ENCODE measurements at regions of chr10 and their contacts with region 1.

Region 1: DNA sequence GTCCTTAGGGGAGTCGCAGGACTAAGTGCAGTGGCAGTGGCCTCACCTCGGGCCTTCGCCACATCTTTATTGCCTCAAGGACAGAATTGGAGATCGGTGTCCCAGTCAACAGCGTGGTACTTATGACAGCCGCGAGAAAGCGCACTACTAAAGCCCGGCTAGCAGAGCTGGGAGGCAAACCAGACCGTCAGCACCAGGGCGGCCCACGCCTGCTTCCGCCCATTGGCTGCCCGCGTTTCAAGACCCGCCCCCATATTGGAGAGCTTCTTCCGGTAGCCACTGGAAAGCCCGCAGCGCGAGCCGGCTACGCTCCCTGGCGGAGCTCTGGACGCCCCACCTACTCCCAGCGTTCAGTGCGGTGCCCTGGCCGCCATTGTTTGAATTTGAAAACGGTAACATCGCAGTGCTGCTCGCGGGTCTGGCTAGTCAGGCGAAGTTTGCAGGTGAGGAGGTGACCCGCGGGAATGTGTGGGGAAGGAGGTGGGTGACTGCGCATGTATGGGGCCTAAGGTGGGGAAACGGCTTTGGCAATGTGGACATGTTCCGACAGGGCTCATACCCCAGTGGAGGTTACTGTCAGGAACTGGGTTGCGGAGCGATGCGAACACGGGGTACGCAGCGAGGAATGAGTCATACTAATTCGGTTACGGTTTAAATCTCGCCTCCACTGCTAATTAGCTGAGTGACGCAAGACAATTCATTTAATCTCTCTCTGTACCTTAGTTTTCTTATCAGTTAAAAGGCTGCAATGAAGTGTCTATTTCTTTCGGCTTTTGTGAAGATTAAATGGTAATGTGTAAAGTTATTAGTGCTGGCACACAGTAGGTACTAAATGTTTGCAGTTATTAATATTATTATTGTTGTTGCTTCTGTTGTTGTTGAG is at the start of gene KIF20B:
- DNase-seq: peak; percentile 97 to 98
- H3K4me3 ChIP-seq: peak within 1 kb of the TSS; percentile 78
- H3K4me3 Mint-ChIP-seq: peak within 1 kb of the TSS; percentile 88
- H3K27ac Mint-ChIP-seq: peak within 1 kb of the TSS; percentile 89
- H3K4me1 ChIP-seq: peaks cover 6% of the 10 kb centered on the region
- H3K4me1 Mint-ChIP-seq: peaks cover 31% of the 10 kb centered on the region
- H3K27me3 ChIP-seq: no peaks in the 10 kb centered on the region
- H3K27me3 Mint-ChIP-seq: no peaks in the 10 kb centered on the region
- CTCF ChIP-seq: peak in 1 of 2 experiments; percentile 63
- total RNA-seq, gene KIF20B: 43.2 and 43.9 TPM in 2 replicates

Region 2: DNA sequence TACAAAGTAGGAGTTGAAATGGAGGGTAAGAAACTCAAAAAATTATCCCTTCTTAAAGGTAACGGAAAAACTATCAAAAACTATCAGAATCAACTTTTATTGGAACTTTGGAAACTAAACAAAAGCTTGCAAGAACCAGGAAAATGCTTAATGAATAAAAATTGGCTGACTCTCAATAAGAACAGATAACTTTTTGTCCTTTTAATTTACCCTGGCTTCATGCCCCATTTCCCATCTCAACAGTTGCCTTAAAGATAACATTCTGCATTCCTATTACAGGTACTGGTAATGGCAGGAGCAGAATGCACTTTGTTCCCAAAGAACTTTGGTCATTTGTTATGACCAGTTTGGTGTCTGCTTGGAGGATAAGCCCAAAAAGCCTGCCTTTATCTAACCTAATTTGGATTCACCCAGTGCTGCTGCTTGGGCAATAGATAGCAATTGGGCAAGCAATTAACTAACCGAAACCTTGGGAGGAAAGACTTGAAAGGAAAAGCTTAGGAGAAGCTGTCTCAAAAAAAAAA is 512.2 kb before region 1 on chr10:
- CTCF ChIA-PET with region 1: no interaction called
- POLR2A ChIA-PET with region 1: no interaction called
- intact Hi-C with region 1: no loop called
- DNase-seq: no peak
- H3K4me3 ChIP-seq: no peak overlapping the region
- H3K4me3 Mint-ChIP-seq: no peak overlapping the region
- H3K27ac Mint-ChIP-seq: no peak overlapping the region
- H3K4me1 ChIP-seq: no peaks in the 10 kb centered on the region
- H3K4me1 Mint-ChIP-seq: no peaks in the 10 kb centered on the region
- H3K27me3 ChIP-seq: no peaks in the 10 kb centered on the region
- H3K27me3 Mint-ChIP-seq: peaks cover 4% of the 10 kb centered on the region
- CTCF ChIP-seq: no peak

Region 3: GRCh38 chr10:89251409-89252224 is 449.9 kb before region 1 on chr10 and contains the start of gene LIPA:
- CTCF ChIA-PET with region 1: no interaction called
- POLR2A ChIA-PET with region 1: no interaction called
- intact Hi-C with region 1: loop called (anchors 10 kb)
- DNase-seq: peak; percentile 93 to 96
- H3K4me3 ChIP-seq: peak within 1 kb of the TSS; percentile 73
- H3K4me3 Mint-ChIP-seq: peak within 1 kb of the TSS; percentile 91
- H3K27ac Mint-ChIP-seq: no peak within 1 kb of the TSS
- H3K4me1 ChIP-seq: no peaks in the 10 kb centered on the region; the same call in 1 of the 2 replicates
- H3K4me1 Mint-ChIP-seq: peaks cover 6% of the 10 kb centered on the region
- H3K27me3 ChIP-seq: no peaks in the 10 kb centered on the region
- H3K27me3 Mint-ChIP-seq: no peaks in the 10 kb centered on the region
- CTCF ChIP-seq: no peak
- total RNA-seq, gene LIPA: 18.8 and 20.4 TPM in 2 replicates

Region 4: DNA sequence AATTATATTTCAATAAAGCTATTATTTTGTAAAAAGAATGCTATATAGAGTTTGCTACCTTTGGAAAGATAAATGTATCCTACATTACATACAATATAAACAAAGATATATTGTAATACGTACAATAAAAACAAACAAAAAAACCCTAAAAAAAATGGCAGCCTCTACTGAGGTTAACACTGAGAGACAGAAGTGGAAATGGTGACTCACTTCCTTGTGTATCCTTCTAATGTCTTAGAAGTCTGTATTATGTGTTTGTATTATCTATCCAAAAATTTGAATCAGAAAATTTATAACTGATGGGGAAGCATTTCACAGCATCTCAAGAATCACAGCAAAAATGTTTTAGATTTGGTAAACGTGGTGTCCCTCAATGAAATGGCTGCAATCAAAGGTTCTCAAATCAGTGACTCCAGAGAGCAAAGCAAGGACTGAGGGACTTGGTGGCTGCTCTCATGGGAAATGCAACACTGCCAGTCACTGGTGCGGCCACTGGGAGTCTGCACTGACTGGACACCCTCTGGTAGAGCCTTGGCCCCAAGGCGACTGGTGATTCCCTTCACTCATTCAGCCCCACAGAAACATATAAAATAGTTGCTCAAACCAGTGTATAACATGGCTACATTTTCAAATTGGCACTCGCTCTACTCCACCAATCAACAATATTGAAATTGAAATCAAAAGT is 110.2 kb before region 1 on chr10:
- CTCF ChIA-PET with region 1: no interaction called
- POLR2A ChIA-PET with region 1: no interaction called
- intact Hi-C with region 1: loop called (anchors 5 kb)
- DNase-seq: peak; percentile 9 to 40
- H3K4me3 ChIP-seq: no peak overlapping the region
- H3K4me3 Mint-ChIP-seq: no peak overlapping the region
- H3K27ac Mint-ChIP-seq: peak overlapping the region; percentile 27
- H3K4me1 ChIP-seq: peaks cover 13% of the 10 kb centered on the region
- H3K4me1 Mint-ChIP-seq: peaks cover 6% of the 10 kb centered on the region
- H3K27me3 ChIP-seq: no peaks in the 10 kb centered on the region
- H3K27me3 Mint-ChIP-seq: no peaks in the 10 kb centered on the region
- CTCF ChIP-seq: no peak

Region 5: DNA sequence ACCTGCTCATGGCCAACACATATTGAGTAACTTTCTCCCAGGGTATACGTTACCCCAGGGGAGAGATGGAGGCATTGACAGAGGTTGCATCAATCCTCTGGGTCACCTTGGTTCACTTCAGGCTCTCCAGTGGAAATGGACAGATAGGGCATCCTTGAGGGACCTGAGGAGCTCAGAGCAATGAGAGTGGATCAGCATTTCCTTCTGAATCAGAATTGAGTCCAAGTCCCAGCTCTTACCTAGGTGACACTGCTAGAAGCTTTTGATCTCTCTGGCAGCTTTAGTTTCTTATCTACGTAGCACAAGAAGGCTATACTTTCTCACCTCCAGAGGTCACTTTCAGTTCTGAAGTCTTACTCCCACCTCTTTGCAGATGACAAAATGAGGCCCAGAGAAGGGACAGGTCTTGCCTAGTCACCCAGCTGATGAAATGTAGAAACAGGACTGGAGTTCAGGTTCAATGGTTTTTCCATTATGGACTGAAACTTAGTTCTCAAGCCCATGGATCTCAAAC is 91.6 kb before region 1 on chr10:
- CTCF ChIA-PET with region 1: interaction called, 11 read pairs
- POLR2A ChIA-PET with region 1: interaction called, 4 read pairs
- intact Hi-C with region 1: loop called (anchors 1 kb)
- DNase-seq: peak; percentile 52 to 66
- H3K4me3 ChIP-seq: no peak overlapping the region
- H3K4me3 Mint-ChIP-seq: no peak overlapping the region
- H3K27ac Mint-ChIP-seq: peak overlapping the region; percentile 63
- H3K4me1 ChIP-seq: peaks cover 18% of the 10 kb centered on the region
- H3K4me1 Mint-ChIP-seq: no peaks in the 10 kb centered on the region
- H3K27me3 ChIP-seq: no peaks in the 10 kb centered on the region
- H3K27me3 Mint-ChIP-seq: no peaks in the 10 kb centered on the region
- CTCF ChIP-seq: peak in 1 of 2 experiments; percentile 15

Region 6: DNA sequence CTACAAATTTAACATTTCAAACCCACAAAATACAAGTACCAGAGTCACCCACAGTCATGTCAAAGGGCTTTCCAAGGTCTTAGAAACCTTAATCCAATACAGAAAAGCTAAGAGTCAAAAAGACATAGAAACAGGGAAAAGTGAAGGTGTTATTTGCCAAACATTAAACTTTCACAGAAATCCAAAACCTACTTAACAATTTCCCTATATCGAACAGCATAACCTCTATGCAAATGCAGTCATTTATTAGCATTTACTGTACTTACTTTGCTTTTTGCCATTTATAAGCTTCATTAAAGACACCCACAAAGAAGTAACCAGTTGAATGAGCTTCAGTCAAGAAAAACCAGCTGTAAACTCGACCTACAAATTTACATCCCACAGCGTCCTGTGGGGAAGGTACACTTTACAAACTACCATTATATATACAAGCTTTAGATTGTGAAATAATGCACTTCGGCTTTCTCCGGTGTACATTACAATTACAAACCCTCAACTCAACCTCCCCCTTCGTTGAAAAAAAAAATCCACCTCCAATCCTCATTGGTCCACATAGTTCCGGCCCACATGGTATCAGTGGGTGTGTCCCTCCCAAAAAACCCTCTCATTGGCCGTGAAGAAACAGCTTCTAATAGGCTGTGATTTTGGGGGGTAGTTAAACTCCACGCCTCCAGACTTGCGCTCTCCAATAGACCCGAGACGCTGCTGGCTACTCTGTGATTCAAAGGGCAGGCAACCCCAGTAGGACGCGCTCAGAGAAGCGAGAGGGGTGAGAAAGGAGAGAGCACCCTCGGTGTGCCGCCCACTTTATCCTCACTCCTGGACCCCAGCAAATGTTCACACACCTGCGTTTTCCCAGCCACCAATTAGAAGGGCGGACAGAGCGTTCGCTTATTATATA is 57.8 kb before region 1 on chr10:
- CTCF ChIA-PET with region 1: interaction called, 28 read pairs
- POLR2A ChIA-PET with region 1: interaction called, 54 read pairs
- intact Hi-C with region 1: loop called (anchors 1 kb)
- DNase-seq: peak; percentile 92 to 95
- H3K4me3 ChIP-seq: peak overlapping the region; percentile 83
- H3K4me3 Mint-ChIP-seq: no peak overlapping the region
- H3K27ac Mint-ChIP-seq: no peak overlapping the region
- H3K4me1 ChIP-seq: peaks cover 25% of the 10 kb centered on the region
- H3K4me1 Mint-ChIP-seq: peaks cover 16% of the 10 kb centered on the region
- H3K27me3 ChIP-seq: no peaks in the 10 kb centered on the region
- H3K27me3 Mint-ChIP-seq: no peaks in the 10 kb centered on the region
- CTCF ChIP-seq: no peak

Region 7: GRCh38 chr10:89668386-89669071 is 33.0 kb before region 1 on chr10:
- CTCF ChIA-PET with region 1: no interaction called
- POLR2A ChIA-PET with region 1: no interaction called
- intact Hi-C with region 1: loop called (anchors 2 kb)
- DNase-seq: peak in 1 of 2 experiments; percentile 20
- H3K4me3 ChIP-seq: no peak overlapping the region
- H3K4me3 Mint-ChIP-seq: no peak overlapping the region
- H3K27ac Mint-ChIP-seq: no peak overlapping the region
- H3K4me1 ChIP-seq: peaks cover 5% of the 10 kb centered on the region; the same call in 1 of the 2 replicates
- H3K4me1 Mint-ChIP-seq: no peaks in the 10 kb centered on the region
- H3K27me3 ChIP-seq: no peaks in the 10 kb centered on the region
- H3K27me3 Mint-ChIP-seq: no peaks in the 10 kb centered on the region
- CTCF ChIP-seq: no peak

Measured in Caco-2 (cell line).